ENCODE measurements at regions of chr2 and their contacts with region 1.

Region 1: GRCh38 chr2:24577481-24577880 is 86.4 kb downstream of the NCOA1 start:
- DNase-seq: no peak
- H3K4me3 ChIP-seq: no peak overlapping the region
- H3K4me3 Mint-ChIP-seq: no peak overlapping the region
- H3K27ac Mint-ChIP-seq: no peak overlapping the region
- H3K4me1 ChIP-seq: peaks cover 42% of the 10 kb centered on the region
- H3K4me1 Mint-ChIP-seq: peaks cover 34% of the 10 kb centered on the region
- H3K27me3 ChIP-seq: no peaks in the 10 kb centered on the region
- H3K27me3 Mint-ChIP-seq: no peaks in the 10 kb centered on the region
- CTCF ChIP-seq: no peak

Region 2: GRCh38 chr2:24515831-24516230 is 61.6 kb before region 1 on chr2:
- CTCF ChIA-PET with region 1: no interaction called
- POLR2A ChIA-PET with region 1: no interaction called
- intact Hi-C with region 1: loop called (anchors 5 kb)
- DNase-seq: no peak
- H3K4me3 ChIP-seq: no peak overlapping the region
- H3K4me3 Mint-ChIP-seq: no peak overlapping the region
- H3K27ac Mint-ChIP-seq: no peak overlapping the region
- H3K4me1 ChIP-seq: no peaks in the 10 kb centered on the region
- H3K4me1 Mint-ChIP-seq: peaks cover 20% of the 10 kb centered on the region
- H3K27me3 ChIP-seq: no peaks in the 10 kb centered on the region
- H3K27me3 Mint-ChIP-seq: no peaks in the 10 kb centered on the region
- CTCF ChIP-seq: no peak

Measured in Caco-2 (cell line).